CD8-positive, alpha-beta T cell (primary cell): ENCODE measurements at regions of chr11 and their contacts with region 1.

Region 1: GRCh38 chr11:61161190-61162091 is at the start of gene VPS37C:
- DNase-seq: peak; percentile 85 to 97 (median 91)
- ATAC-seq: peak; percentile 73
- H3K4me3 ChIP-seq: peak within 1 kb of the TSS; percentile 63 to 65
- H3K4me3 Mint-ChIP-seq: peak within 1 kb of the TSS; percentile 87
- H3K27ac ChIP-seq: peak within 1 kb of the TSS; percentile 58 to 88
- H3K27ac Mint-ChIP-seq: peak within 1 kb of the TSS; percentile 94
- H3K4me1 ChIP-seq: peaks cover 16% of the 10 kb centered on the region
- H3K4me1 Mint-ChIP-seq: peaks cover 53% of the 10 kb centered on the region
- H3K27me3 ChIP-seq: no peaks in the 10 kb centered on the region
- H3K27me3 Mint-ChIP-seq: peaks cover 2% of the 10 kb centered on the region
- CTCF ChIP-seq: no peak
- total RNA-seq, gene VPS37C: 2.1 to 2.2 TPM

Region 2: DNA sequence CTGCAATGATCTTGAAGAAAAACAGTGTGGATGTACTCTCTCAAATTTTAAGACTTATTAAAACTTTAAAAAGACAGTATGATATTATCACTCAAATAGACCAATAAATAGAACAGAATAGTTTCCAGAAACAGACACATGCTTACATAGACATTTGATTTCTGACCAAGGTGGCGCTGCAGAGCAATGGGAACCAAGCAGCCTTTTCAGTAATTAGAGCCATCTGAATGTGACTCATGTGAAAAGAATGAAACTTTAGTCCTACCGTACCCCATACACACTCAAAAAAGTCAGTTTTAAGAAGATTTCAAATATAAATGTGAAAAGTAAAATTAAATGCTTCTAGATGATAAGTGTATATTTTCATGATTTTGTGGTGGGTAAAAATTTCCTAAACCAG is 536.2 kb before region 1 on chr11:
- CTCF ChIA-PET with region 1: no interaction called
- POLR2A ChIA-PET with region 1: no interaction called
- intact Hi-C with region 1: no loop called
- DNase-seq: no peak
- ATAC-seq: no peak
- H3K4me3 ChIP-seq: no peak overlapping the region
- H3K4me3 Mint-ChIP-seq: no peak overlapping the region
- H3K27ac ChIP-seq: no peak overlapping the region
- H3K27ac Mint-ChIP-seq: no peak overlapping the region
- H3K4me1 ChIP-seq: no peaks in the 10 kb centered on the region
- H3K4me1 Mint-ChIP-seq: no peaks in the 10 kb centered on the region
- H3K27me3 ChIP-seq: no peaks in the 10 kb centered on the region
- H3K27me3 Mint-ChIP-seq: peaks cover 7% of the 10 kb centered on the region
- CTCF ChIP-seq: no peak

Region 3: GRCh38 chr11:60906132-60906972 is 255.1 kb before region 1 on chr11 and contains the start of gene PRPF19:
- CTCF ChIA-PET with region 1: no interaction called
- POLR2A ChIA-PET with region 1: no interaction called
- intact Hi-C with region 1: loop called (anchors 1 to 2 kb)
- DNase-seq: peak; percentile 98 to 100 (median 99)
- ATAC-seq: peak; percentile 92
- H3K4me3 ChIP-seq: peak within 1 kb of the TSS; percentile 61 to 81
- H3K4me3 Mint-ChIP-seq: peak within 1 kb of the TSS; percentile 89
- H3K27ac ChIP-seq: peak within 1 kb of the TSS; percentile 79 to 93
- H3K27ac Mint-ChIP-seq: peak within 1 kb of the TSS; percentile 99
- H3K4me1 ChIP-seq: peaks cover 45% of the 10 kb centered on the region
- H3K4me1 Mint-ChIP-seq: peaks cover 71% of the 10 kb centered on the region
- H3K27me3 ChIP-seq: no peaks in the 10 kb centered on the region
- H3K27me3 Mint-ChIP-seq: no peaks in the 10 kb centered on the region
- CTCF ChIP-seq: no peak
- total RNA-seq, gene PRPF19: 96.1 to 99.4 TPM

Region 4: DNA sequence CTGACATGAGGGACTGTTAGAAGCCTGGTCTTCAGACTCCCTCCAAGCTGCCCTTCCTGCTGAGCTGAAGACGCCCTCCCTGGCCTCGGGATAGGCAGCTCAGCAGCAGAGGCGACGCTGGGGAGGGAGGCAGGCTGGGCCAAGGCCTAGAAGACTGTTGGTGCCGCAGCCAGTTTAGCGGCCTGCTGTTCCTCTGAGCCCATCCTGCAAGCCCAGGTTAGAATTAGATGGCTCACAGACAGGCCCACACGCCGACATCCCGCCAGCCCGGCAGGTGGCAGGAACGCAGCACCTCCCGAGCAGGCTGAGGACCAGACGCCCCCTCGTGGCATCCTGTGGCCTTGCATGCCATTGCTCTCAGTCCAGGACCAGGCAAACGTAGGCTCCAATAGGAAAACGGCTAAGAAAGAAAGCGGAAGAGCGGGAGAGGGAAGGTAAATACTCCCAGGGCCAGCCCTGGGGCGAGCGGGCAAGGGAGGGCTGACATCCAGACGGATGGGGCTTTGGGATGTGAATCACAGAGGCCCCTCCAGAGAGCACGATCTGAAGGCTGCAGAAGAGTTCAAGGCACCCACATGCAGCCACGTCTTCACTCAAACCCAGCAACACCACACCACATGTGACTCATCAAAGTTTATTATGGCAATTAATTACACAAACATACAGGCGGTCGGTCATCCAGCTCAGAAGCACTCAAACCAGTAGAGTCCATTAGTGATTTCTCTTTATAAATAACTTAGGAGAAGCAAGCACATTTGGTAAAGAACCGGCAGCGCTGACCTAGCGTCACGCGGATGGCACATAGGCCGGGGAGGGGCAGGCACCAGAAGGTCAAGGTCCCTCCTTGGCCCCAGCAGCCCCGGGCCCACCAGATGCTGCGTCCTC is 31.6 kb before region 1 on chr11:
- CTCF ChIA-PET with region 1: interaction called, 3 read pairs
- POLR2A ChIA-PET with region 1: no interaction called
- intact Hi-C with region 1: loop called in 1 of 2 experiments (anchors 5 kb)
- DNase-seq: peak; percentile 76 to 95 (median 91)
- ATAC-seq: peak; percentile 91
- H3K4me3 ChIP-seq: no peak overlapping the region
- H3K4me3 Mint-ChIP-seq: peak overlapping the region; percentile 46
- H3K27ac ChIP-seq: no peak overlapping the region
- H3K27ac Mint-ChIP-seq: peak overlapping the region; percentile 64
- H3K4me1 ChIP-seq: peaks cover 17% of the 10 kb centered on the region
- H3K4me1 Mint-ChIP-seq: peaks cover 21% of the 10 kb centered on the region
- H3K27me3 ChIP-seq: no peaks in the 10 kb centered on the region
- H3K27me3 Mint-ChIP-seq: no peaks in the 10 kb centered on the region
- CTCF ChIP-seq: peak; percentile 100

Region 5: DNA sequence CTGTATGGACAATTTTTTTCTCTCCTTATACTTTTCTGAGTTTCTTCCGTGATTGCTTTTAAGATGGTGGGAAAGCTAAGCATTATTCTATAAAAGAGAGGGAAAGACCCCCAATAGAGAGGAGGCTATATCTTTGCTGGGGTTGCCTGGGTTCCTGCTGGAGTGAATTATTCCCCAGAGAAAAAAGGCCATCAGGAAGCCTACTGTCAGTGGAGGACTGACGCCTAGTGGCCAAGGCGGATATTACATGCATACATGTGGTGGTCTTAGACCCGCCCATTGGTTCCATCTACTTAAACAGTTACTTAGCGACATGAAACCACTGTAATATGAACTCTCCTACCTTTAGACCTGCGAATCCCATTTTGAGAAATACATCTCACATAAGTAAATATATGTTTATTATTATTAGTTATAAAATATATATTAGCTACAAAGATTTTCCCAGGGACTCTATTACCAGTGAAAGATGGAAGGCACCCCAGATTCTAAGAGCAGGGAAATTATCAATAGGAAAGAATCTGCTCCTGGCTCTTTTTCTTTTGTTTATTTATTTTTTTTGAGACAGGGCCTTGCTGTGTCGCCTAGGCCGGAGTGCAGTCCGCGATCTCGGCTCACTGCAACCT is 26.2 kb after region 1 on chr11:
- CTCF ChIA-PET with region 1: interaction called, 6 read pairs
- POLR2A ChIA-PET with region 1: no interaction called
- intact Hi-C with region 1: loop called in 1 of 2 experiments (anchors 1 kb)
- DNase-seq: peak; percentile 64 to 89 (median 83)
- ATAC-seq: peak; percentile 100
- H3K4me3 ChIP-seq: no peak overlapping the region
- H3K4me3 Mint-ChIP-seq: no peak overlapping the region
- H3K27ac ChIP-seq: no peak overlapping the region
- H3K27ac Mint-ChIP-seq: no peak overlapping the region
- H3K4me1 ChIP-seq: no peaks in the 10 kb centered on the region
- H3K4me1 Mint-ChIP-seq: peaks cover 3% of the 10 kb centered on the region
- H3K27me3 ChIP-seq: peaks cover 0 to 3% of the 10 kb centered on the region in 2 experiments
- H3K27me3 Mint-ChIP-seq: no peaks in the 10 kb centered on the region
- CTCF ChIP-seq: peak; percentile 98

Region 6: DNA sequence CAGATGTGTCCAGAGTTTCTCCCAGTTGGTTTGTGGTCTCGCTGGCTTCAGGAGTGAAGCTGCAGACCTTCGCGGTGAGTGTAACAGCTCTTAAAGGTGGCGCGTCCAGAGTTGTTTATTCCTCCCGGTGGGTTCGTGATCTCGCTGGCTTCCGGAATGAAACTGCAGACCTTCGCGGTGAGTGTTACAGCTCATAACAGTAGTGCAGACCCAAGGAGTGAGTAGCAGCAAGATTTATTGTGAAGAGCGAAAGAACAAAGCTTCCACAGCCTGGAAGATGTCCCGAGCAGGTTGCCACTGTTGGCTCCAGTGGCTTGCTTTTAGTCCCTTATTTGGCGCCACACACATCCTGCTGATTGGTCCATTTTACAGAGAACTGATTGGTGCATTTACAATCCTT is 40.0 kb after region 1 on chr11:
- CTCF ChIA-PET with region 1: no interaction called
- POLR2A ChIA-PET with region 1: no interaction called
- intact Hi-C with region 1: no loop called
- DNase-seq: no peak
- ATAC-seq: no peak
- H3K4me3 ChIP-seq: no peak overlapping the region
- H3K4me3 Mint-ChIP-seq: no peak overlapping the region
- H3K27ac ChIP-seq: no peak overlapping the region
- H3K27ac Mint-ChIP-seq: no peak overlapping the region
- H3K4me1 ChIP-seq: no peaks in the 10 kb centered on the region
- H3K4me1 Mint-ChIP-seq: no peaks in the 10 kb centered on the region
- H3K27me3 ChIP-seq: no peaks in the 10 kb centered on the region
- H3K27me3 Mint-ChIP-seq: peaks cover 20% of the 10 kb centered on the region
- CTCF ChIP-seq: no peak

Region 7: GRCh38 chr11:61429691-61430582 is 268.5 kb after region 1 on chr11 and contains the starts of genes CPSF7 and SDHAF2:
- CTCF ChIA-PET with region 1: no interaction called
- POLR2A ChIA-PET with region 1: no interaction called
- intact Hi-C with region 1: loop called in 1 of 2 experiments (anchors 5 kb)
- DNase-seq: peak; percentile 93 to 99 (median 98)
- ATAC-seq: peak; percentile 80
- H3K4me3 ChIP-seq: peak within 1 kb of the TSS; percentile 70 to 95
- H3K4me3 Mint-ChIP-seq: peak within 1 kb of the TSS; percentile 97
- H3K27ac ChIP-seq: peak within 1 kb of the TSS; percentile 98 to 100
- H3K27ac Mint-ChIP-seq: peak within 1 kb of the TSS; percentile 100
- H3K4me1 ChIP-seq: peaks cover 53% of the 10 kb centered on the region
- H3K4me1 Mint-ChIP-seq: peaks cover 72% of the 10 kb centered on the region
- H3K27me3 ChIP-seq: no peaks in the 10 kb centered on the region
- H3K27me3 Mint-ChIP-seq: no peaks in the 10 kb centered on the region
- CTCF ChIP-seq: no peak
- total RNA-seq, gene CPSF7: 106 to 111 TPM
- total RNA-seq, gene SDHAF2: 31.4 to 33.0 TPM